ENCODE measurements at regions of chr2 and their contacts with region 1.

Region 1: DNA sequence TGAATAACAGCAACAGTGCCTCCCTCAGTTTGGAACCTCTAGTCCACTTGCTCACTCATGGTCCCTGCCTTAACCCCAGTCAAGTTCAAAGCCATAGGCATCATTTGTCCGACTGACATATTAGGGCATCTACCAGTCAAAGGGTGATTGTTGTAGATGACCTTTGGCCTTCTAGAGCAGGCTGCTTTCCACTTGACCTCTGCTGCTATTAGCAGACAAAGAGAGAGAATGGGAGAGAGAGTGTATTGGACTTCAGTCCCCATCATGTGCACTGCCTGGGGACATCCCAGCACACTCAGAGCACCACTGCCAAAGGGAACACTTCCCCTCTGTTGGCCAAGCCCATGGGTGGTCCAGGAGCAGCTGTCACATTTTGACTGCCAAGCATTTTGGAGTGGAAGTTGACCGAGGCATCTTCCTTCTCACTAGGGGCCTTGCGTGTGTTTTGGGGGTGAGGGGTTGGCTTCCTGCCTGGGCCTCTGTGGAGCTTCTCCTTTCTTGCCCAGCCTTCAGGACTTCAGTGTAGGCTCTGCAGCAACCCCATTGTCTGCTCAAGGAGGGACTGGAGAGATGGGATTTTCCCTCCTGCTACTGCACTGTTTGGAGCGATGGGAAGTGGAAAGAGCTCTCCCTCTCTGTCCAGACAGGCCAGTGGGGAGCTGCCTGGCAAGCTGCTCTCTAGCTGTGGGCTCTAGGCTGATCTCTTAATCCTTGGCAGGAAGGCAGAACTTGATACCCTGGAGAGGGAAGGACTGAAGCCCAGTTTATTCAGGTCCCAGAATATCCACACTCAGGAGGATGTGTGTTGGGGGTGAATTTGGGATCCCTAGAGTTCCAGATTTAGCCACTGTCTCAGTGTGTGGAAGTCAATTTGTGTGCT is 68.1 kb downstream of the TMEM247 start:
- DNase-seq: peak in 14 of 42 donors; percentile 25 to 67 (median 47)

Region 2: GRCh38 chr2:46241344-46241743 is 306.1 kb before region 1 on chr2:
- intact Hi-C with region 1: no loop called
- DNase-seq: no peak

Region 3: GRCh38 chr2:46469116-46469515 is 78.3 kb before region 1 on chr2:
- intact Hi-C with region 1: loop called (anchors 5 kb)
- DNase-seq: no peak

Measured in head of caudate nucleus (tissue), 42 donors.